ENCODE measurements at regions of chrX and their contacts with region 1.

Region 1: GRCh38 chrX:46268429-46268828 is 276.8 kb downstream of the ZNF674 start:
- DNase-seq: peak; percentile 62
- ATAC-seq: peak; percentile 73
- H3K4me3 ChIP-seq: peak overlapping the region in 1 of 2 experiments; percentile 13; a peak in 1 of 4 replicates
- H3K27ac ChIP-seq: peak overlapping the region; percentile 35; the same call in 1 of the 2 replicates
- H3K4me1 ChIP-seq: peaks cover 22 to 79% of the 10 kb centered on the region in 2 experiments
- H3K27me3 ChIP-seq: no peaks in the 10 kb centered on the region
- CTCF ChIP-seq: no peak
- POLR2A ChIP-seq: no peak
- RAD21 ChIP-seq: no peak

Region 2: GRCh38 chrX:45849253-45849862 is 419.1 kb before region 1 on chrX:
- CTCF ChIA-PET with region 1: no interaction called
- POLR2A ChIA-PET with region 1: no interaction called
- RAD21 ChIA-PET with region 1: no interaction called
- intact Hi-C with region 1: loop called (anchors 10 kb)
- DNase-seq: peak; percentile 57
- ATAC-seq: no peak
- H3K4me3 ChIP-seq: peak overlapping the region; percentile 76 to 81
- H3K27ac ChIP-seq: peak overlapping the region; percentile 87; the same call in 1 of the 2 replicates
- H3K4me1 ChIP-seq: peaks cover 18 to 64% of the 10 kb centered on the region in 2 experiments
- H3K27me3 ChIP-seq: no peaks in the 10 kb centered on the region
- CTCF ChIP-seq: peak in 1 of 3 experiments; percentile 21; a peak in 1 of 6 replicates
- POLR2A ChIP-seq: no peak
- RAD21 ChIP-seq: no peak

Region 3: GRCh38 chrX:46198858-46199257 is 69.6 kb before region 1 on chrX:
- CTCF ChIA-PET with region 1: no interaction called
- POLR2A ChIA-PET with region 1: no interaction called
- RAD21 ChIA-PET with region 1: no interaction called
- intact Hi-C with region 1: no loop called
- DNase-seq: no peak
- ATAC-seq: no peak
- H3K4me3 ChIP-seq: no peak overlapping the region
- H3K27ac ChIP-seq: no peak overlapping the region
- H3K4me1 ChIP-seq: peaks cover 17 to 36% of the 10 kb centered on the region in 2 experiments
- H3K27me3 ChIP-seq: no peaks in the 10 kb centered on the region
- CTCF ChIP-seq: no peak
- POLR2A ChIP-seq: no peak
- RAD21 ChIP-seq: no peak